ENCODE measurements at regions of chr6 and their contacts with region 1.

Region 1: GRCh38 chr6:98845211-98846020 is 11.0 kb downstream of the POU3F2 start:
- DNase-seq: peak; percentile 66
- H3K4me3 Mint-ChIP-seq: peak overlapping the region; percentile 46
- H3K27ac Mint-ChIP-seq: no peak overlapping the region
- H3K4me1 Mint-ChIP-seq: peaks cover 8% of the 10 kb centered on the region
- H3K27me3 Mint-ChIP-seq: peaks cover 43% of the 10 kb centered on the region
- CTCF ChIP-seq: peak; percentile 74

Region 2: GRCh38 chr6:97497713-97498331 is 1347.6 kb before region 1 on chr6:
- CTCF ChIA-PET with region 1: interaction called, 3 read pairs
- POLR2A ChIA-PET with region 1: no interaction called
- intact Hi-C with region 1: loop called (anchors 1 kb)
- DNase-seq: peak; percentile 72
- H3K4me3 Mint-ChIP-seq: no peak overlapping the region
- H3K27ac Mint-ChIP-seq: no peak overlapping the region
- H3K4me1 Mint-ChIP-seq: no peaks in the 10 kb centered on the region
- H3K27me3 Mint-ChIP-seq: peaks cover 53% of the 10 kb centered on the region
- CTCF ChIP-seq: peak; percentile 81

Region 3: GRCh38 chr6:97705568-97705967 is 1139.8 kb before region 1 on chr6:
- CTCF ChIA-PET with region 1: interaction called, 3 read pairs
- POLR2A ChIA-PET with region 1: no interaction called
- intact Hi-C with region 1: loop called (anchors 5 kb)
- DNase-seq: peak; percentile 14
- H3K4me3 Mint-ChIP-seq: no peak overlapping the region
- H3K27ac Mint-ChIP-seq: no peak overlapping the region
- H3K4me1 Mint-ChIP-seq: no peaks in the 10 kb centered on the region
- H3K27me3 Mint-ChIP-seq: peaks cover 50% of the 10 kb centered on the region
- CTCF ChIP-seq: peak; percentile 51

Region 4: DNA sequence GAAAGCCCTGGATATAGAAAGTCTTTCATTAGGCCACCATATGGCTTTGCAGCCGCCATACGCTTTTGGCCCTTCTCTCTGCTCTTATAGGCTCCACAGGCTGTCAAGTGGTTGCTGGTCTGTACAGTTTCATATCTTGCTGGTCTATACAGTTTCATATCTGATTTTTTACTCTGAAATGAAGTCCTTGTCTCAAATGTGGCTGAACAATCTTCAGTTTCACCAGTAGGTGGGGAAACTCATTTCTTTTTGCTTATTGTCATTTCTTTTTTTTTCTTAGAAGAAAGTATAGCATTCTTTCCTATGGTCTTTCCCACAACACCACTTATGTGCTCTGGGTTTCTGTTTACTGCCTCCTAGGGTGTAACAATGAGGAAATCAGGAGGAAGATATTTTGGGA is 791.0 kb before region 1 on chr6:
- CTCF ChIA-PET with region 1: no interaction called
- POLR2A ChIA-PET with region 1: no interaction called
- intact Hi-C with region 1: loop called (anchors 1 kb)
- DNase-seq: no peak
- H3K4me3 Mint-ChIP-seq: no peak overlapping the region
- H3K27ac Mint-ChIP-seq: no peak overlapping the region
- H3K4me1 Mint-ChIP-seq: no peaks in the 10 kb centered on the region
- H3K27me3 Mint-ChIP-seq: peaks cover 76% of the 10 kb centered on the region
- CTCF ChIP-seq: peak; percentile 11

Region 5: GRCh38 chr6:98525860-98526259 is 319.6 kb before region 1 on chr6:
- CTCF ChIA-PET with region 1: no interaction called
- POLR2A ChIA-PET with region 1: no interaction called
- intact Hi-C with region 1: no loop called
- DNase-seq: no peak
- H3K4me3 Mint-ChIP-seq: no peak overlapping the region
- H3K27ac Mint-ChIP-seq: no peak overlapping the region
- H3K4me1 Mint-ChIP-seq: no peaks in the 10 kb centered on the region
- H3K27me3 Mint-ChIP-seq: no peaks in the 10 kb centered on the region
- CTCF ChIP-seq: no peak

Region 6: GRCh38 chr6:98769544-98769943 is 75.9 kb before region 1 on chr6:
- CTCF ChIA-PET with region 1: no interaction called
- POLR2A ChIA-PET with region 1: no interaction called
- intact Hi-C with region 1: loop called (anchors 1 kb)
- DNase-seq: peak; percentile 47
- H3K4me3 Mint-ChIP-seq: no peak overlapping the region
- H3K27ac Mint-ChIP-seq: no peak overlapping the region
- H3K4me1 Mint-ChIP-seq: peaks cover under 1% of the 10 kb centered on the region
- H3K27me3 Mint-ChIP-seq: peaks cover 73% of the 10 kb centered on the region
- CTCF ChIP-seq: peak; percentile 7

Region 7: GRCh38 chr6:99119109-99120031 is 274.0 kb after region 1 on chr6:
- CTCF ChIA-PET with region 1: interaction called, 3 read pairs
- POLR2A ChIA-PET with region 1: no interaction called
- intact Hi-C with region 1: loop called (anchors 1 kb)
- DNase-seq: peak; percentile 65
- H3K4me3 Mint-ChIP-seq: no peak overlapping the region
- H3K27ac Mint-ChIP-seq: no peak overlapping the region
- H3K4me1 Mint-ChIP-seq: no peaks in the 10 kb centered on the region
- H3K27me3 Mint-ChIP-seq: peaks cover 60% of the 10 kb centered on the region
- CTCF ChIP-seq: peak; percentile 61

Measured in MCF 10A (cell line).